ENCODE measurements at regions of chr7 and their contacts with region 1.

Region 1: DNA sequence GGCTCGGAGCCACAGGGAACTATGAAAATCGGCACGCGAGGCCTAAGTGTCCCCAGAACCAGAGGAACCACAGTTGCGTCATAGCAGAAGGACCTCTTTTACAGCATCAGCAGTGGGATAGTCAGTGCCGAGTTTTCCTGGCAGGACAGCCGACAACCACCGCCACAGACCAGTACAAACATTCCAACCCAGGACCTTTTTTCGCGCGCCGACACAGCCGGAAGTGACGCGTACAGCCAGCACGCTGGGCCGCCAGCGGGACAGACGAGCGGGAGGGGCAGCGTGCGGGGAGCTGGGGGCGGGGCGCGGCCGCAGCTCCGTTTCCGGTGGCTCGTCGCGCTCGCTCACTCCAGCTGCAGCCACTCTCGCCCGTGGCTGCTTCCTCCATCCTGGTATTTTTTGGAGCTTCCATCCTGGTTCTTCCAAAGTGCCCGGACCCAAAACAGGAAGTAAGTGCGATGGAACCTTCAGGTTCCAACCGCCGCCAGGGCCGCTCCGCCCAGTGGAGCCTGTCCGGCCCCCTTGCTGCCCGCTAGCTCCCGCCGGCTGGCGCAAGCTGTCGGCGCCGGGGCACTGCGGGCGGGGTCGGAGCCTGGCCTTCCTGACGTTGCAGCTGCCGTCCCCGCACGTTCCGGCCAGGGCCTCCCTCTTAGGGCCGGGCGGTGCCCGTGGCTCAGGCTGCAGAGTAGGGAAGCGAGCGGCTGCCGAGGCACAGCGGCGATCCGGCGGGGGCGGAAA is at the start of gene DMTF1:
- DNase-seq: peak; percentile 92
- ATAC-seq: peak; percentile 84
- H3K4me3 Mint-ChIP-seq: peak within 1 kb of the TSS; percentile 90
- H3K27ac Mint-ChIP-seq: peak within 1 kb of the TSS; percentile 97
- H3K4me1 Mint-ChIP-seq: peaks cover 37% of the 10 kb centered on the region
- H3K27me3 Mint-ChIP-seq: no peaks in the 10 kb centered on the region
- total RNA-seq, gene DMTF1: 104 to 121 TPM

Region 2: DNA sequence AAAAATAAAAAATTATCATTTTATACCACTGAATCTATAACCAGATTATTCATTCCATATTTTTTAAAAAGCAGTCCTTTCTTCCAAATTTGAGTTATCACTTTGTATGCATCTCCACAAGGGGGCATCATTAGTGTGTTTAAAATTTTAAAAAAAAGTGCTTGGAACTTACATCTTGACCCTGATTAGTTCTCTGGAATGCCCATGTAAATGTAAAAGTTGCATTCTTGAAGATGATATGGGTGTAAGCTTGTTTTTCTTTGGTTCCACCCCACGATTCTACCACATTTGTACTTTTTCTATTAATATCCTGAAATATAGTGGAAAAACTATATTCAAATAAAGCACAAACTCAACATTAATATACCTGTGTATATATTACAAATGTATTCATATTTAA is 237.7 kb before region 1 on chr7:
- CTCF ChIA-PET with region 1: interaction called, 15 read pairs
- DNase-seq: no peak
- ATAC-seq: no peak
- H3K4me3 Mint-ChIP-seq: no peak overlapping the region
- H3K27ac Mint-ChIP-seq: no peak overlapping the region
- H3K4me1 Mint-ChIP-seq: peaks cover 8% of the 10 kb centered on the region
- H3K27me3 Mint-ChIP-seq: no peaks in the 10 kb centered on the region

Region 3: DNA sequence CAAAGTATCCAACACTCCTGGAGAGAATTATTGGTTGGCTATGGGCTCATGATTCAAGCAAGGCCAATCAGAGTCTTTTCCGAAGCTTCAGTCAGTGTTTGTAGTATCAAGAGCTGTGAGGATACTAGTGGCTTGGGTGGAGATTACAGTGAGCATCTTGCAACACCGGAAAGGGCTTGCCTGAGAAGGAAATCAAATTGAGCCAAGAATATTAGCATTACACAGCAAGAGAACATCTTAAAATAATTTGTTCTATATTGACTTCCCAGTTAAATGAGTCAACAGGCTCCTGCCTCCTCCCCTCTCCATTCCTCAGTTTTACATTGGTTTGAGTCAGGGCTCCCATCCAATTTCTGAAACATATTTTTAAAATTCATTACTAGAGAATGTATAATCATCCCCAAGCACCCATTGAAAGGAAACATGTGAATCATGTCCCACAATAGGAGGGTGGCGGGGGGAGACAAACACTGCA is 220.2 kb before region 1 on chr7:
- CTCF ChIA-PET with region 1: interaction called, 42 read pairs
- DNase-seq: no peak
- ATAC-seq: no peak
- H3K4me3 Mint-ChIP-seq: no peak overlapping the region
- H3K27ac Mint-ChIP-seq: no peak overlapping the region
- H3K4me1 Mint-ChIP-seq: no peaks in the 10 kb centered on the region
- H3K27me3 Mint-ChIP-seq: peaks cover 2% of the 10 kb centered on the region

Region 4: DNA sequence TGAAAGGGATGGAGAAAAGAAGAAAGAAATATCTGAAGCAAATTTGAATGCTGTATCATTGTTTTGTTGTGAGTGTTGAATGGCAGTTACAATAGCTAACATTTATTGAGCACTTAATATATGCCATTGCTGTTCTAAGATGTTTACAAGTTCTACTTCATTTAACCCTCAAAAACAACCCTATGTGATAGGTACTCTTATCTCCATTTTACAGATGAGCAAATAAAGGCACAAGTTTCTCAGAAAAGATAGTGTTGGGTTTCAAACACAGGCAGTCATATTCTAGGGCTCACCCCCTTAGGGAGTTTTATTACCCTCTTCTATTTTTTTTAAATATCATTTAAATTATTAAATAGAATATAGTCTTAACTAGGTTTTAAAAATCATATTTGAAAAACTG is 84.5 kb before region 1 on chr7:
- CTCF ChIA-PET with region 1: no interaction called
- DNase-seq: no peak
- ATAC-seq: no peak
- H3K4me3 Mint-ChIP-seq: no peak overlapping the region
- H3K27ac Mint-ChIP-seq: no peak overlapping the region
- H3K4me1 Mint-ChIP-seq: no peaks in the 10 kb centered on the region
- H3K27me3 Mint-ChIP-seq: peaks cover 27% of the 10 kb centered on the region

Region 5: GRCh38 chr7:87137271-87137670 is 15.0 kb before region 1 on chr7:
- CTCF ChIA-PET with region 1: interaction called, 10 read pairs
- DNase-seq: no peak
- ATAC-seq: no peak
- H3K4me3 Mint-ChIP-seq: no peak overlapping the region
- H3K27ac Mint-ChIP-seq: no peak overlapping the region
- H3K4me1 Mint-ChIP-seq: peaks cover 3% of the 10 kb centered on the region
- H3K27me3 Mint-ChIP-seq: peaks cover 33% of the 10 kb centered on the region

Region 6: GRCh38 chr7:87219545-87220025 is 67.3 kb after region 1 on chr7 and contains the start of gene TMEM243:
- CTCF ChIA-PET with region 1: interaction called, 42 read pairs
- DNase-seq: peak; percentile 90
- ATAC-seq: peak; percentile 76
- H3K4me3 Mint-ChIP-seq: peak within 1 kb of the TSS; percentile 97
- H3K27ac Mint-ChIP-seq: peak within 1 kb of the TSS; percentile 96
- H3K4me1 Mint-ChIP-seq: peaks cover 33% of the 10 kb centered on the region
- H3K27me3 Mint-ChIP-seq: peaks cover 10% of the 10 kb centered on the region
- total RNA-seq, gene TMEM243: 32.2 to 42.3 TPM